GM18951 (cell line): ENCODE measurements at regions of chr22 and their contacts with region 1.

Region 1: DNA sequence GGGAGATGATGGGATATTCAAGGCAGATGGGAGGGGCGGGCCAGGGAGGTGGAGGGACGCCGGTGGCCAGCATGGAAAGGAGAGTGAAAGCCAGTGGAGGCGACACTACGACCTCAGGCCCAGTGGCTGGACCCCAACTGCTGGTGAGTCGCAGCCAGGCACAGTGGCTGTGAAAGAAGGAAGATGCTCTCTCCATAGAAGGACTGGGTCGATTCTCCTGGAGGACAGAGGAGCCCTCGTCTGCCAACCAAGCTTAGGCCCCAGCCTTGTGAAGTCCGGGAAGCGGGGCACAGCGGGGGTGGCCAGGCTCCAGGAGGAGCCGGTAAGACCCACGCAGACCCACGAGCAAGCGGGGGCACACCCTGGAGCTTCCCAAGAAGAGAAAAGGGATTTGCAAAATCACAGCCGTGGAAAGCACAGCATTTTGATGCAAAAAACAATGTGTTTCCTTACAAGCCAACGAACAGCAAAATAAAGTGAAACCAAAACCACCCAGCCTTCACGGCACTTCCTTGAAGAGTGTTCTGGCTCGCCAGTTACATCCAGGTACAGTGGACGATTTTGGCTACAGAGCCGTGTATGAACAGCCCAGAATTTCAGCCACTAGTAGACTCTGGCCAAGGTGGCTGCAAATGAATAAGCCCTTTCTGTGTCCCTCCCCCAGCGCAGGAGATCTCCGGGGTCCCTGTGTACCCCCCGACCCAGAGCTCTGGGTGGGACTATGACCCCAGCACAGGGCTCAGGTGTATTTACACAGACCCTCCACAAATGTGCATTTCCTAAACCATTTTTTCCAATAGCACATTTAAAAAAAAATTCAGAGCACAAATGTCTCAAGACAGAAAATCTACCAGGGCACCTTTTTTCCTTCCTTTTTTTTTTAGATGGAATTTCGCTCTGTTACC is 96.9 kb downstream of the TRMU start:
- POLR2A ChIP-seq: peak; percentile 32

Region 2: DNA sequence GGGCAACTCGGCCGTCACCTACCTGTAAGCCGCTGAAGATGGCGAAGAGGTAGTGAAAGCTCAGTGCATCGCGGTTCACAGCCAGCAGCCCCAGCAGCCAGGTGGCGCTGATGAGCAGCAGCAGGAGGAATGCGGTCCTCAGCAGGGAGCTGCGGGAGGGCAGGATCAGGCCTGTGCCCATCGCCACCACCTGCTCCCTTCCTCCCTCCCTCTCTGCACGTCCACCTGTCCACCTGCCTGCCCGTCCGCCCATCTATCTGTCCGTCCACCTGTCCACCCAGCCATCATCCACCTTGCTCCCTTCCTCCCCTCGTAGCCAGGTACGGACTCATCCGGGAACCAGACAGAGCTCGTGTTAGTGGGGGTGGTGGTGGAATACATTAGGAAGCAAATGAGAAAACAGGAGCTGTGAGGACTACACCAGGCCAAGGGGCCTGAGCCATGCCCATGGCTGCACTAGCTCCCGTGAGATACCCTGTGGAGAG is 64.7 kb before region 1 on chr22:
- in situ Hi-C with region 1: loop called (anchors 10 kb)
- POLR2A ChIP-seq: no peak

Region 3: DNA sequence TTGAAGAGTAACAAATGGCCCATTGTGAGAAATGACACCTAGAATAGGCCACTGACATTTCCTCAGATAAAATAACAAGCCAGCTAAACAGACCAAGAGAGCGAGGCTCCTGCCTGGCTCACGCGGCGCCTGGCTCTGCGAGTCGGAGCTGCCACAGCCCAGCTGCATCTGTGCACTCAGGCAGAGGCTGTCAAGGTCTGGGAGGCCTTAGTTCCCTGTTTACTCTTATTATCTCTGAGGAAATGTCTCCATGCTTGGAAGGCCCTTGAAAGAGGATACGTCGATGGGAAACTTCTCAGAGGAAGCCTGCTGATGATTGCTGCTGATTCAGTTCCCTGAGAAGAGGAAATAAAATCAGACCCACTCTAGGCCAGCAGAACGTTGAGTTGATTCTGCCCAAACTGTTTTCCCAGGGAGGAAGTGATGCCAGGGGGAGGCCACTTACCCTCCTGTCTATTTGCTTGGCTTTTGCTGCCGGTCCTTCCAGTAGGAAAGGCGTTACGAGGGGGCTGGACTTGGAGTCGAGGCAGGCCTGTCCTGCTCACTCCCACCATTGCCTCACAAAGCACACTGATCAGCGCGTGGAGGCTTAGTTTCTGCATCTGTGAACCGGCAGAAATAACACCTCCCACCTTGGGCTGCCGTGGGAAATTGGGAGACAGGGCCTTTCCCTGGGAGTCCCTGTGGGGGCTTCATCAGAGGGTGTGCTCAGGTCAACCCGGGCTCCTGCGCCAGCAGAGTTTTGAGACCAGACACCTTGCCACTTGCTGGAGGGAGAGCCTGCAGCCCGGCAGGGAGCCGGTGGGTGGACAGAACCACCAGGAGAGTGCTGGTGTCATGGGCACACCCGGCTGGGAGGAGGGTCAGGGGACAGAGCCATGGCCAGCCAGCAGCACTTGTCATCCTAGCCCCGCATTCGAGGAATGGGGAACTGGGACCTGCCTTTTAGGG is 539.0 kb after region 1 on chr22:
- in situ Hi-C with region 1: no loop called
- POLR2A ChIP-seq: no peak

Region 4: GRCh38 chr22:48268771-48269552 is 1836.5 kb after region 1 on chr22:
- in situ Hi-C with region 1: no loop called
- POLR2A ChIP-seq: no peak